H1 (cell line): ENCODE measurements at regions of chr7 and their contacts with region 1.

Region 1: DNA sequence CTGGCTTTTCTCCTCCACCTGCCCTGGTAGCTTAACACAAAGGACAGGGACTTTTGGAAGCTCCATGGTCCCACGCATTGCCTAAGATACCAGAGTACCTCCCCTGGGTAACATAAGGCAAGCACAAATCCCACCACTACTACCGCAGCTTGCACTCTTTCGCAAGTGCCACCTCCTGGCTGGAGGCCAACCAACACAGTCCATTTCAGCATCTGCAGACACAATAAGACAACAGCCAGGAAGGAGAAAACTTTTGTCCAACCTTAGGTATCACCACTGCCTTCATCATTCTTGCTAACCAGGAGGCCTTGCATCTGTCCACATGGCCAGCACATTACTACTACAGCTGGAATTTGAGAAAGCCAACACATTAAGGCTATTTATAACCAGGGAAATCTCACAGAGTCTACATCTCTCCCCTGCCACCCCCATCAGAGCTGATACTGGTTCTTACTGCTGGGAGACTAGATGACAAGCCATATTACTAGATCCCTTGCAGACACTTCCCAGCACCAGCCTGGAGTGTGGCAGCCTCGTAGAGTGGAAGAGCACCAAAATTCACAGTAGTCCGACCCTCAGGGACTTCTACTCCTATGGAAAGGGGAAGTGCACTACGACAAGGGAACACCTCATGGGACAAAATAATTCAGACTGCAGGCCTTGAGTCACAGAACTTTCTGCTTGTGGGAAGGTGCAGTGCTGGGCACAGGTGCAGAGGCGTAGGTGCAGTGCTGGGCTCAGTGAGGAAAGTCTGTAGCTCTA is 39.8 kb upstream of the CDK13 start:
- DNase-seq: no peak
- H3K4me3 ChIP-seq: no peak overlapping the region
- H3K27ac ChIP-seq: no peak overlapping the region
- H3K4me1 ChIP-seq: no peaks in the 10 kb centered on the region
- H3K27me3 ChIP-seq: no peaks in the 10 kb centered on the region
- CTCF ChIP-seq: peak in 1 of 3 experiments; percentile 10; a peak in 1 of 4 replicates
- EP300 ChIP-seq: no peak
- POLR2A ChIP-seq: no peak
- RAD21 ChIP-seq: no peak

Region 2: GRCh38 chr7:39921506-39922175 is 11.4 kb after region 1 on chr7:
- CTCF ChIA-PET with region 1: interaction called, 16 read pairs
- POLR2A ChIA-PET with region 1: no interaction called
- DNase-seq: peak in 1 of 2 experiments; percentile 37
- H3K4me3 ChIP-seq: no peak overlapping the region
- H3K27ac ChIP-seq: no peak overlapping the region
- H3K4me1 ChIP-seq: peaks cover 0 to 10% (median 0%) of the 10 kb centered on the region in 4 experiments; a peak in 1 of 7 replicates
- H3K27me3 ChIP-seq: no peaks in the 10 kb centered on the region
- CTCF ChIP-seq: no peak
- EP300 ChIP-seq: no peak
- POLR2A ChIP-seq: no peak
- RAD21 ChIP-seq: no peak